BJ (cell line): ENCODE measurements at regions of chr6 and their contacts with region 1.

Region 1: DNA sequence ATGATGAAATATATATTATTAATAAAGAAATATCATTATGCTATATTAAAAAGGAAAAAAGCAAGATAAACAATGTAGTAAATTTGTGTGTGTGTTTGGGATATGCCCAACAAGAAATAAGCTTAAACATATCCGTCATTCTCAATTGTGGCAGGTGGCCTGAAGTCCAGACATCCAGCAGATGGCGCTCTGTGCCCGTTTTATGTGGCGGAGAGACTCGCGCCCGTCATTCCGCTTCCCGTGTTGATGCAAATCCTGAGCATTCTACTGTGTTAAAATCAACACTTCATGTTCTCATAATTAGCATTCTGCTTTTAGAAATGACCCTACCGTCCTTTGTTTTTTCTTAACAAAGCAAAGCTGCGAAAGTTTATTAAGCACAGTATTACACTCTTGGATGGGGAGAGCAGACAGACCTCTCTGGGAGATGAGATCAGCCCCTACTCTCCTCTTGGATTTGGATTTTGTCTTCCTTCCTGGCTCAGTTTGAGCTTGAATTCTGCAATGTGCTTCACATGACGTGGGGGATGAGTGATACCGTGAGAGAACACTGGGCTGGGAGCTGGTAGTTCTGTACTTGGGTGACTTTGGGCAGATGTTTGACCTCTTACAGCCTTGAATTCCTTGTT is 125.8 kb downstream of the MCHR2 start:
- DNase-seq: no peak
- H3K4me3 ChIP-seq: no peak overlapping the region
- H3K27me3 ChIP-seq: peaks cover 4% of the 10 kb centered on the region; the same call in 1 of the 2 replicates
- CTCF ChIP-seq: peak; percentile 80

Region 2: GRCh38 chr6:99349171-99350141 is 518.7 kb before region 1 on chr6 and contains the start of gene FAXC:
- CTCF ChIA-PET with region 1: no interaction called
- POLR2A ChIA-PET with region 1: no interaction called
- DNase-seq: no peak
- H3K4me3 ChIP-seq: peak within 1 kb of the TSS; percentile 44
- H3K27me3 ChIP-seq: peaks cover 2% of the 10 kb centered on the region; the same call in 1 of the 2 replicates
- CTCF ChIP-seq: peak; percentile 23; the same call in 1 of the 2 replicates
- polyA plus RNA-seq, gene FAXC: 3.8 and 5.1 TPM in 2 replicates

Region 3: DNA sequence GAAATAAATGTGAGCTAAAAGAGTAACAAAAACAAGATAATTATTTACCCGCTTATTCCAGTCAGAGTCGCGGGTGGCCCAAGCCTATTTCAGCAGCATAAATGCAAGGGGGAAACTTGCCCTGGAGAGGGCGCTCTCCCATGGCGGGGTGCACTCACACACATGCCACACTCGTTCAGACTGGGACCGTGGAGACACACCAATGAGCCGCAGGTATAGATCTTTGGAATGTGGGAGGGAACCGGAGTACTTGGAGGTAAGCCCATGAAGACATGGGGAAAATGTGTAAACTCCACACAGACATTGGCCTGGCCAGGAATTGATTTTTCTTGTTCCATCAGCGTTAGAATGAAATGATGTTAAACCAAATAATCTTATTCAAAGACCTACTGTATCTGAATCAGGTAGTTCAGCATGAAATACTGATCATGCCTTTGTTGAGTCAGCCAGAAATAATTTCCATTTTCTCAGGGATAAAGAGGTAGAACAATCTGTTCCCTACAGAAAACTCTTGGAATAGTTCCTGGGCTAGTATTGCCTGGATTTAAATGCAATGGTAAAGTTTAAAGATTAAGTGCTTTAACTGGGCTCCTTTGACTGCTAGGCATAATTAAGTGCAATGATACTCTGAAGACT is 65.7 kb before region 1 on chr6:
- CTCF ChIA-PET with region 1: no interaction called
- POLR2A ChIA-PET with region 1: no interaction called
- DNase-seq: no peak
- H3K4me3 ChIP-seq: no peak overlapping the region
- H3K27me3 ChIP-seq: peaks cover 1% of the 10 kb centered on the region; the same call in 1 of the 2 replicates
- CTCF ChIP-seq: no peak

Region 4: GRCh38 chr6:99882128-99882702 is 14.0 kb after region 1 on chr6:
- CTCF ChIA-PET with region 1: interaction called, 20 read pairs
- POLR2A ChIA-PET with region 1: no interaction called
- DNase-seq: no peak
- H3K4me3 ChIP-seq: no peak overlapping the region
- H3K27me3 ChIP-seq: no peaks in the 10 kb centered on the region; the same call in 1 of the 2 replicates
- CTCF ChIP-seq: no peak

Region 5: GRCh38 chr6:100001915-100002388 is 133.8 kb after region 1 on chr6:
- CTCF ChIA-PET with region 1: interaction called, 30 read pairs
- POLR2A ChIA-PET with region 1: no interaction called
- DNase-seq: no peak
- H3K4me3 ChIP-seq: no peak overlapping the region
- H3K27me3 ChIP-seq: no peaks in the 10 kb centered on the region
- CTCF ChIP-seq: peak; percentile 94

Region 6: GRCh38 chr6:100099189-100100074 is 231.2 kb after region 1 on chr6:
- CTCF ChIA-PET with region 1: interaction called, 153 read pairs
- POLR2A ChIA-PET with region 1: no interaction called
- DNase-seq: no peak
- H3K4me3 ChIP-seq: no peak overlapping the region
- H3K27me3 ChIP-seq: no peaks in the 10 kb centered on the region
- CTCF ChIP-seq: peak; percentile 42

Region 7: GRCh38 chr6:100116411-100117194 is 248.4 kb after region 1 on chr6:
- CTCF ChIA-PET with region 1: interaction called, 11 read pairs
- POLR2A ChIA-PET with region 1: no interaction called
- DNase-seq: peak; percentile 57
- H3K4me3 ChIP-seq: no peak overlapping the region
- H3K27me3 ChIP-seq: no peaks in the 10 kb centered on the region
- CTCF ChIP-seq: peak; percentile 75